Esophagus squamous epithelium (tissue), 5 donors: ENCODE measurements at regions of chr4 and their contacts with region 1.

Region 1: GRCh38 chr4:147096667-147097604 is 151.3 kb upstream of the TTC29 start:
- DNase-seq: no peak
- H3K4me3 ChIP-seq: no peak overlapping the region
- H3K27ac ChIP-seq: peak overlapping the region in 1 of 4 donors; percentile 3
- H3K4me1 ChIP-seq: no peaks in the 10 kb centered on the region
- H3K27me3 ChIP-seq: peaks cover 0 to 7% (median 0%) of the 10 kb centered on the region in 4 donors
- CTCF ChIP-seq: peak; percentile 47 to 76 (median 56)
- POLR2A ChIP-seq: no peak

Region 2: GRCh38 chr4:146333187-146333894 is 763.6 kb before region 1 on chr4:
- intact Hi-C with region 1: loop called (anchors 10 kb)
- DNase-seq: no peak
- H3K4me3 ChIP-seq: no peak overlapping the region
- H3K27ac ChIP-seq: no peak overlapping the region
- H3K4me1 ChIP-seq: peaks cover 6 to 43% (median 7%) of the 10 kb centered on the region in 3 donors
- H3K27me3 ChIP-seq: no peaks in the 10 kb centered on the region
- CTCF ChIP-seq: no peak
- POLR2A ChIP-seq: no peak

Region 3: GRCh38 chr4:146899722-146900121 is 197.2 kb before region 1 on chr4:
- intact Hi-C with region 1: no loop called
- DNase-seq: no peak
- H3K4me3 ChIP-seq: no peak overlapping the region
- H3K27ac ChIP-seq: no peak overlapping the region
- H3K4me1 ChIP-seq: no peaks in the 10 kb centered on the region
- H3K27me3 ChIP-seq: peaks cover 0 to 14% (median 0%) of the 10 kb centered on the region in 4 donors
- CTCF ChIP-seq: no peak
- POLR2A ChIP-seq: no peak